Tibial artery (tissue), 4 donors: ENCODE measurements at regions of chr2 and their contacts with region 1.

Region 1: DNA sequence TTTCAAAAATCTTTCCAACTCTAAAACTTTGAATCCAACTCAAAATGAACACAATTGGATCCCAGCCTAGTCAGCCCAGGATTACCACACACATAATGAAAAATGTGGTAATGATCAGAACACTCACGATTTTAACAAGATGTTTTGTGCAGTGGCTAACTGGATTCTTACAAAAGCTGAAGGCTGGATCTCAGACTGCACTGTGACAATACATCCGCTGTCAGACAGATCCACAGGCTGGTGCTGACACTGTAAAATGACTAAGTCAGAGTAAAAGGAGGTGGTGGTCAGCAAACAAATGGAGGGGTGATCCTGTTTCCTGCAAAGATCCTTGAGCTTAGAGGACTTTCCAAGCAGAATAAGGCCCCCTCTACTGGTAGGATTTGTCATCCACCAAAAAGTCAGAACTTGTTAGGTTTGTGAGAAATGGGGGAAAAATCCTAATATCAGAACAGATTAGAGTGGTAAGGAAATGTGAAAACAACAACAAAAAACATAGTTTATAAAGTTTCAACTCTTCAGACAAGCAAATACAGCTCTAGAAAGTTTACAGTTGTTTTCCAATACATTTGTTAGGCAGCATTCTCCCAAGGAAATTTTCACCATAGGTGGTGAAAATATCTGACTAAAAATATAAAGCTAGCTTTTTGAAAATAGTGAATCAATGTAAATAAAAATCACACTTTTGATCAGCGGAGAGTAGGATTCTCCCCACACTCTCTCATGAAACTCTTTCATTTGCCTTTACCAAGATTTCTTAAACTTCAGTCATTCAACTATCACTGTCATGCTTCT is 211.9 kb downstream of the AGPS start:
- DNase-seq: peak in 1 of 2 donors; percentile 36
- H3K4me3 ChIP-seq: no peak overlapping the region
- H3K27ac ChIP-seq: no peak overlapping the region
- H3K4me1 ChIP-seq: peaks cover 0 to 2% (median 0%) of the 10 kb centered on the region in 4 donors
- H3K27me3 ChIP-seq: no peaks in the 10 kb centered on the region
- CTCF ChIP-seq: peak; percentile 45 to 53

Region 2: GRCh38 chr2:177489719-177490301 is 114.7 kb before region 1 on chr2:
- intact Hi-C with region 1: loop called (anchors 10 kb)
- DNase-seq: no peak
- H3K4me3 ChIP-seq: no peak overlapping the region
- H3K27ac ChIP-seq: no peak overlapping the region
- H3K4me1 ChIP-seq: no peaks in the 10 kb centered on the region
- H3K27me3 ChIP-seq: no peaks in the 10 kb centered on the region
- CTCF ChIP-seq: peak; percentile 14 to 28

Region 3: GRCh38 chr2:177692828-177693269 is 88.4 kb after region 1 on chr2:
- intact Hi-C with region 1: no loop called
- DNase-seq: no peak
- H3K4me3 ChIP-seq: no peak overlapping the region
- H3K27ac ChIP-seq: no peak overlapping the region
- H3K4me1 ChIP-seq: no peaks in the 10 kb centered on the region
- H3K27me3 ChIP-seq: no peaks in the 10 kb centered on the region
- CTCF ChIP-seq: no peak